ENCODE measurements at regions of chr12 and their contacts with region 1.

Region 1: GRCh38 chr12:120971299-120972179 is 6.8 kb upstream of the HNF1A start:
- DNase-seq: peak in 23 of 42 donors; percentile 11 to 72 (median 43)

Region 2: GRCh38 chr12:120649442-120650232 is 321.9 kb before region 1 on chr12:
- intact Hi-C with region 1: loop called (anchors 5 kb)
- DNase-seq: peak in 16 of 42 donors; percentile 16 to 60 (median 36)

Region 3: GRCh38 chr12:120928864-120929652 is 42.5 kb before region 1 on chr12:
- intact Hi-C with region 1: no loop called
- DNase-seq: no peak

Region 4: DNA sequence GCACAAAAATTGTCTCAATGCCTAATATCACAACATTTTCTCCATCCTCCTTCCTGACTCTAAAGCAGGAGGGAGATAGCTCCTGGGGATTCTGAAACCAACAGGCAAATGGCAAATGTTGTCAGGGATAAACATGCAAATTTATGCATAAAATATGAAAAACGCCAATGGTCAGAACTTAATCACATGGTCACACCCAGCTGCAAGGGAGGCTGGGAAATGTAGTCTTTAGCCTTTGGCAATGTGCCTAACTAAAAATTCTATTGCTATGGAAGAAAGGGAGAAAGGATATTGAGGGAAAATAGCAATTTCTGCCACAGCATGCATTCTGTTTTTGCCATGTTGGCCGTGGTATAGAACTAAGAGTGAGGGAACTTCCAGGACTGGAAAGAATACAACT is 79.2 kb after region 1 on chr12:
- intact Hi-C with region 1: no loop called
- DNase-seq: peak in 1 of 42 donors; percentile 15

Measured in head of caudate nucleus (tissue), 42 donors.